CD8-positive, alpha-beta T cell (primary cell): ENCODE measurements at regions of chr2 and their contacts with region 1.

Region 1: GRCh38 chr2:65056215-65057053 is at the start of gene CEP68:
- DNase-seq: peak; percentile 89 to 98 (median 96)
- ATAC-seq: peak; percentile 89
- H3K4me3 ChIP-seq: peak within 1 kb of the TSS; percentile 85 to 86
- H3K4me3 Mint-ChIP-seq: peak within 1 kb of the TSS; percentile 99
- H3K27ac ChIP-seq: peak within 1 kb of the TSS; percentile 62 to 72
- H3K27ac Mint-ChIP-seq: peak within 1 kb of the TSS; percentile 97
- H3K4me1 ChIP-seq: peaks cover 70% of the 10 kb centered on the region
- H3K4me1 Mint-ChIP-seq: peaks cover 73% of the 10 kb centered on the region
- H3K27me3 ChIP-seq: no peaks in the 10 kb centered on the region
- H3K27me3 Mint-ChIP-seq: no peaks in the 10 kb centered on the region
- CTCF ChIP-seq: no peak
- total RNA-seq, gene CEP68: 19.9 to 20.5 TPM

Region 2: GRCh38 chr2:64609227-64609941 is 447.1 kb before region 1 on chr2:
- CTCF ChIA-PET with region 1: no interaction called
- POLR2A ChIA-PET with region 1: no interaction called
- intact Hi-C with region 1: loop called in 1 of 2 experiments (anchors 1 kb)
- DNase-seq: peak; percentile 37 to 85 (median 66)
- ATAC-seq: peak; percentile 65
- H3K4me3 ChIP-seq: peak overlapping the region; percentile 56 to 63
- H3K4me3 Mint-ChIP-seq: peak overlapping the region; percentile 79
- H3K27ac ChIP-seq: peak overlapping the region in 1 of 2 experiments; percentile 49
- H3K27ac Mint-ChIP-seq: peak overlapping the region; percentile 66
- H3K4me1 ChIP-seq: peaks cover 26% of the 10 kb centered on the region
- H3K4me1 Mint-ChIP-seq: peaks cover 29% of the 10 kb centered on the region
- H3K27me3 ChIP-seq: no peaks in the 10 kb centered on the region
- H3K27me3 Mint-ChIP-seq: no peaks in the 10 kb centered on the region
- CTCF ChIP-seq: peak; percentile 23

Region 3: GRCh38 chr2:64988420-64989125 is 67.9 kb before region 1 on chr2:
- CTCF ChIA-PET with region 1: no interaction called
- POLR2A ChIA-PET with region 1: interaction called, 4 read pairs
- intact Hi-C with region 1: loop called (anchors 2 to 5 kb)
- DNase-seq: peak; percentile 10 to 82 (median 51)
- ATAC-seq: peak; percentile 41
- H3K4me3 ChIP-seq: peak overlapping the region; percentile 57 to 68
- H3K4me3 Mint-ChIP-seq: peak overlapping the region; percentile 77
- H3K27ac ChIP-seq: peak overlapping the region; percentile 31 to 36
- H3K27ac Mint-ChIP-seq: no peak overlapping the region
- H3K4me1 ChIP-seq: peaks cover 11% of the 10 kb centered on the region
- H3K4me1 Mint-ChIP-seq: peaks cover 27% of the 10 kb centered on the region
- H3K27me3 ChIP-seq: no peaks in the 10 kb centered on the region
- H3K27me3 Mint-ChIP-seq: peaks cover 7% of the 10 kb centered on the region
- CTCF ChIP-seq: no peak

Region 4: DNA sequence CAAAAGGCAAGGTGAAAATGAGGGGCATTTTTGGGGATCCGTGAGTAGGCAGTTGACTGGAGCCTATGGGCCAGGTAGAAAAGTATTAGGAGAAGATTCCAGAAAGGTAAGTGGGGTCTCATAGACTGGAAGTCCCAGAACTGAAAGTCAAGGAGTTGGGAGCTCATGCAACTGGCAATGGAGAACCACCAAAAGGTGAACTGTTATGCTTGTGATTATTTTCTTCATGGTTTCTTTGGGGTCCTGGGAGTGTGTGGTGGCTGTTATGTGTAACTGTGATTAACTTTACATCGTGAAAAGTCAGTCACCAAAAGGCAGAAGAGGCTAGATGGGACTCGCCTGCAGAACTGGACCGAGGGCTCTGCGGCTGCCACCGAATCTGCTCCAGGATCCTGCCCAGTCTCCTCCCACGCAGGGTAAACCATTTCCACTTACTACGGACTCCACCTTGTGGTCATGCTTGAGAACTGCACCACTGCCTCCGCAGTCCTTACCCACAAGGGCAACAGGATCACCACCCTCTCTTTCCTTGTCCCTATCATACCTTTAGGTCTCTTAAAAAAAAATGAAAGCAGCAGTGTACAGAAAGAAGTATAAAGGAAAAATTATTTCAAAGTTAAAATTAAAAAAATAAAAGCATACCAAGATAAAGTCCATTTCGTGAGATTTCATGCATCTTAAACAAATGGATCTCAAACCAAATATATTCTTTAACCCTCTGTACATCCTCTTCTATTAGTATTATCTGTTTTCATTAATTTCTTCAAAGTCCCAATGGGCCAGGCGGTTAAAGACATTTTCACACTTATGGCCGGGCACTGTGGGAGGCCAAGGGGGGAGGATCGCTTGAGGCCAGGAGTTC is 15.8 kb before region 1 on chr2:
- CTCF ChIA-PET with region 1: interaction called, 12 read pairs
- POLR2A ChIA-PET with region 1: interaction called, 3 read pairs
- intact Hi-C with region 1: loop called in 1 of 2 experiments (anchors 1 kb)
- DNase-seq: peak; percentile 48 to 86 (median 77)
- ATAC-seq: peak; percentile 100
- H3K4me3 ChIP-seq: no peak overlapping the region
- H3K4me3 Mint-ChIP-seq: no peak overlapping the region
- H3K27ac ChIP-seq: no peak overlapping the region
- H3K27ac Mint-ChIP-seq: no peak overlapping the region
- H3K4me1 ChIP-seq: peaks cover 5% of the 10 kb centered on the region
- H3K4me1 Mint-ChIP-seq: peaks cover 11% of the 10 kb centered on the region
- H3K27me3 ChIP-seq: no peaks in the 10 kb centered on the region
- H3K27me3 Mint-ChIP-seq: no peaks in the 10 kb centered on the region
- CTCF ChIP-seq: peak; percentile 83

Region 5: GRCh38 chr2:65227425-65228262 is 171.2 kb after region 1 on chr2 and contains the start of gene ACTR2:
- CTCF ChIA-PET with region 1: no interaction called
- POLR2A ChIA-PET with region 1: interaction called, 12 read pairs
- intact Hi-C with region 1: loop called (anchors 2 kb)
- DNase-seq: peak; percentile 87 to 98 (median 94)
- ATAC-seq: peak; percentile 94
- H3K4me3 ChIP-seq: peak within 1 kb of the TSS; percentile 74 to 89
- H3K4me3 Mint-ChIP-seq: peak within 1 kb of the TSS; percentile 99
- H3K27ac ChIP-seq: peak within 1 kb of the TSS; percentile 94 to 98
- H3K27ac Mint-ChIP-seq: peak within 1 kb of the TSS; percentile 99
- H3K4me1 ChIP-seq: peaks cover 43% of the 10 kb centered on the region
- H3K4me1 Mint-ChIP-seq: peaks cover 47% of the 10 kb centered on the region
- H3K27me3 ChIP-seq: no peaks in the 10 kb centered on the region
- H3K27me3 Mint-ChIP-seq: no peaks in the 10 kb centered on the region
- CTCF ChIP-seq: no peak
- total RNA-seq, gene ACTR2: 101 to 117 TPM